Activated CD4-positive, alpha-beta T cell treated with anti-CD3 and anti-CD28 coated beads, Interleukin-2, amount 10 ng/mL, durations not matched to agents 7 days and 5 days (primary cell): ENCODE measurements at regions of chr5 and their contacts with region 1.

Region 1: DNA sequence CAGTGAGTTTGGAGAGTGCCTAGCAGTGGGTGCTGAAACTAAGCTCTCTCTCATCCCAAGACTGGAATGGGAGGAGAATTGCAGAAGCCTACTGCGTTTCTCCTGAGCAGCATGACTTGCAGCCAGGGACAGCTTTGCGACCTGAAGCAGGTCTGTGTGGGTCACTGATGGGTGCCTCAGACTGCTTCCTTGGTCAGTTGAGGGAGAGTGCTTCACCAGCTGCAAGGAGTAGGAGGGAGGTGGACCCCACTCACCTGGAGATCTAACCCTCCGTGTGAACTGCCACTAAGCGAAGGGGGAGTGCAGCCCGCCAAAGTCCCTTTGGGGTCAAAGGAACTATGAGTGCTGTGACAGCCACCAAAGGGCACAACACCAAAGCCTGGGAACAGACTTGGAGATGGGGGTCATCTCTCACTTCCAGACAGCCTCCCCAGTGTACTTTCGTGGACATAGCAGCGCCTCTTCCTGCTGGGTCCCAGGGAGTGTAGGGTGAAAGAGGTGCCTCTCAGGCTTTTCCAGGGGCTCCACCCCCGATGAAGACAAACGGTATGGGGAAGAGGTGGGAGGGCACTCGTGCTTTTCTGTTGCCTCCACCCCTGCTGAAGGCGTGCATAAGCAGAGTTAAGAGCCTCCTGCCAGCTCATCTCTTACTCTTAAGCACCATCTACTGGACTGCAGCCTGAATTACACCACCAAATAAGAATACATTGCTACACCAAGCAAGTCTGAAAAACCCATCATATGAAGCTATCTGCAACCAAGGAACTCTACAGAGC is 34.3 kb upstream of the MACIR start:
- DNase-seq: peak; percentile 64
- H3K4me3 Mint-ChIP-seq: no peak overlapping the region
- H3K27ac Mint-ChIP-seq: peak overlapping the region; percentile 22
- H3K4me1 Mint-ChIP-seq: peaks cover 2% of the 10 kb centered on the region
- H3K27me3 Mint-ChIP-seq: peaks cover 23% of the 10 kb centered on the region

Region 2: DNA sequence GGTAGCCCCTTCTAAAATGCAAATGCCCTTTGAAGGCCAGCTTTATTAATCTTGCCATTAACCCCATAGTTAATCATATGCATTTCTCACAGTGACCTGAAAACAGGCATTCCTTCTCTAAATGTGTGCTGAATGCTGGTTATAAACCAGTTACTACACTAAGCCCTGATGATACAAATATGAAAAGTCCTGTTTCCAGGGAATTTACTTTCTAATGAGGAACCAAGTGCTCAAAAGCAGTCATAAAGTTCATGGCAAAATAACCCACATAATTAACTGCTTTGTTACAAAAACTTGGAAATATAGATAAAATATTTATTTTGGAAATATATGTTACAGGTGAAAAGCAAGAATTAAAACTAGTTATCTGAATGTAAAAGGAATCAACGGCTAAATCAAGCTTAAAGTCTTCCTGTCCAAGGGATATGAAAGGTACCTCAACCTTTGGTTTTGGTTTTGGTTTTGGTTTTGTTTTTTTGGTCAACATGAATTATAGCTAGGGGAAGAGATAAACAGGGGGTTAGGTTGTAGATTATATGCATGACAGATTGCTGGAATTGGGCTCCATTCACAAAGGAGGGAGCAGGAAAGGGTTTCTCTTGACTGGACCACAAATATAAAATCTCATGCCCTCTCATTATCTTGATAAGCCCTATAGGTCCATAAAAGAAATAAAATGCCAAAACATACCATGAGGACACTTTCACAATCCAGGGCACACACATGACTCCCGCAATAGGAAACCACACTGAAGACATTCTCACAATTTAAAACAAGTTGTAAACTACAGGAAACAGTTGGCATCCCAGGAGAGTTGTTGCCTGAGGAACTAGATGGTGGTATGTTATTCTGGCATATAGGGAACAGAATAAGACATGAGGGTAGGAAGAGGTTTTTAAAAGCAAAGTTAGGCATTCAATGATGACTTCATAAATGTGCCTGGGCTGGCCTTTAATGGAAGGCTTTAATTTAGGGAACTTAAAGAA is 12.4 kb before region 1 on chr5:
- CTCF ChIA-PET with region 1: interaction called, 21 read pairs
- POLR2A ChIA-PET with region 1: no interaction called
- DNase-seq: no peak
- H3K4me3 Mint-ChIP-seq: peak overlapping the region; percentile 5
- H3K27ac Mint-ChIP-seq: peak overlapping the region; percentile 52
- H3K4me1 Mint-ChIP-seq: peaks cover 37% of the 10 kb centered on the region
- H3K27me3 Mint-ChIP-seq: no peaks in the 10 kb centered on the region